Right ventricle myocardium superior (tissue), 1 donor: ENCODE measurements at regions of chr10 and their contacts with region 1.

Region 1: GRCh38 chr10:30002104-30002950 is 57.1 kb downstream of the JCAD start:
- DNase-seq: peak; percentile 82
- ATAC-seq: peak; percentile 82

Region 2: DNA sequence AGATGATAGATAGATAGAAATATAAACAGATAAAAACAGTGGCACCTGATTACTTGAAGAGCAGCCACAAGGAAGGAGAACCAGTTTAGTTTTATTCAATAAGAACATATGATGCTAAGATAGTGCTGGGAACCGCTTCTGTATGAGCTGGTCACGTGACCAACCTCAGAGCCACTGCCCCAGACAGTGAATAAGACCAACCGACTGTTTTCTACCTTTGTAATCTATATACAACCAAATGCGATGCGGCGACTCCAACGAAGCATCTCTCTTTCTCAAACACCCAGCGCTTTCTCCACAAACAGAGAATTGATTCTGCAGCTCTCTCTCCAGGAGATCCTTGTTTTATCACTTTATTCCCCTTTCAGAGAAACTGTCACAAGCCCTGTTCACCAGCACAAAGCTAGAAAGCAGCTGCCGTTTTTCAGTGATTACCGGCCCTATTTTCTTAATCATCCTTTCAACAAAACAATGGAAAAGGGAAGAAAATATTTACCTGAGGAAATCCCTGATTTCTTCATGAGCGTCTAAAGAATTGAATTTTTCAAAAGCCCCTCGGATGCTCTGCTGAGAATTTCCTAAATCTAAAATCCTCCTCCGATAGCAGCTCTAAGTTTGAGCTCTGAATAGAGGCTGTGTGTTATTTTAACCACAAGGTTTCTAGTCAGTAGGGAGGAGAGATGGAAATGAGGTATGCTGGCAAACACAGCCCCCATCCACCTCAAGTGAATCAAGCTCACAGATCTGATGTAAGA is 112.7 kb after region 1 on chr10:
- intact Hi-C with region 1: no loop called
- DNase-seq: no peak
- ATAC-seq: peak; percentile 41

Region 3: GRCh38 chr10:30186371-30186875 is 184.1 kb after region 1 on chr10:
- intact Hi-C with region 1: loop called (anchors 5 kb)
- DNase-seq: no peak
- ATAC-seq: peak; percentile 46

Region 4: DNA sequence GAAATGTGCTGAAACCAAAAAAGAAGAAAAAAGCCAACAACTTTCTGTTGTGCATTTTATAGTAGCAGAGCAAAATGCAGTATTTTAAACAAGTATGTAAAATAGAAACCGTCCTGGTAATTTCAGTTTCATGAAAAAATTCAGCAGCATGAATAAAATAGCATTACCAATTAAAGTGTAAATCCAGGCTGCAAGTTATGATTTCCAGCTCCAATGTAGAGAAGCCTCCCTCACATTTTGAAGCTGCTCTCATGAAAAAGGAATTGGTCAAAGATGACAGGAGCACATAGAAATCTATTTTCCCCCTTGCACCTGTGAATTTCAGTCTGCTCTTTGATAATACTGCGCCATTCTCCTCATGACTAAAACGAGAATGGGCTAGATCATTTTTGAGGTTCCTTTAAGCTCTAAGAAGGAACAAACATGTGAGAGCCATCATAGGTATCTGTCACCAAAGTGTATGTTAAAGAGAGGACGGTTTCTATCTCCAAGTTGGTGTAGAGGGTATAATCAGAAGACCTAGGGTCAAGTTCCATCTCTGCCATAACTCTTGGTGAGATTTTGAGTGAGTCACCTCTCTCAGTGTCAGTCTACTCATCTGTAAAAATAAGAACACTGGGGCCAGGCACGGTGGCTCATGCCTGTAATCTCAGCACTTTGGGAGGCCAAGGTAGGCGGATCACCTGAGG is 239.2 kb after region 1 on chr10:
- intact Hi-C with region 1: loop called (anchors 5 kb)
- DNase-seq: no peak
- ATAC-seq: no peak